ENCODE measurements at regions of chr6 and their contacts with region 1.

Region 1: DNA sequence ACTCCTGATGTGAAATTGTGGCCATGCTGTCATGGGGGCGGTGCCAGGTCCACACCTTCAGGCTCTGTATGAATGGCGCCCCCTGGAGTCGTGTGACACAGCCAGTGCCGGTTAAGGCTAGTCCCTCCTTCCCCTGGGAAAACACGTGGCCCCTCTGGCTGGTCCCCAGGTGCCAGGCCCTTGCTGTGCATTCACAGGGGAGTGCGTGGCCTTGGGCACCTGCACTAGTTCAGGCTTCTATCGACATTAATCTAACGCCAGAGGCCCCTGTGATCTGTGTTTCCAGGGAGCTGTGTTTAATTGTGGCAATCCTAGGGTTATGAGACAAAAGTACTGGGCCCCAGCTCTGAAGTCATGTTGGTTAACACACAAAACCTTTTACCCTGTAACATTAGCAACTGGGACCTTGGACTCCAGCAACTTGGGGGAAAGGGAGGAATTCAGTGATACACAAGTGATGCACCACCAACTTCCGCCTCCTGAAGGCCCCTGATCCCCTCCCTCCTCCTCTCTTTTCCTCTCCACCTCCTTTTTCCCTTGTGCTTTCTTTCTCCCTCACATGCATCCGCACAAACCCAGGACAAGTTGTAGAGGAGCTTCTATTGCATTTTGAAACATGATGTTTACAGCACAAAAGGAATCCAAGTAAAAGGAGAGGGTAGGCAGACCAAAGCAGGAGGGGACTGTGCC is 74.0 kb downstream of the SSR1 start:
- DNase-seq: peak; percentile 17 to 80 (median 73)
- ATAC-seq: peak; percentile 69
- H3K4me3 ChIP-seq: no peak overlapping the region
- H3K4me3 Mint-ChIP-seq: no peak overlapping the region
- H3K27ac ChIP-seq: no peak overlapping the region
- H3K27ac Mint-ChIP-seq: peak overlapping the region; percentile 55
- H3K4me1 ChIP-seq: no peaks in the 10 kb centered on the region
- H3K4me1 Mint-ChIP-seq: peaks cover 15% of the 10 kb centered on the region
- H3K27me3 ChIP-seq: no peaks in the 10 kb centered on the region
- H3K27me3 Mint-ChIP-seq: no peaks in the 10 kb centered on the region
- CTCF ChIP-seq: peak; percentile 47

Region 2: GRCh38 chr6:6556738-6557505 is 682.1 kb before region 1 on chr6:
- CTCF ChIA-PET with region 1: interaction called, 5 read pairs
- POLR2A ChIA-PET with region 1: no interaction called
- intact Hi-C with region 1: loop called in 1 of 2 experiments (anchors 5 kb)
- DNase-seq: peak in 7 of 9 experiments; percentile 21 to 72 (median 51)
- ATAC-seq: peak; percentile 62
- H3K4me3 ChIP-seq: no peak overlapping the region
- H3K4me3 Mint-ChIP-seq: no peak overlapping the region
- H3K27ac ChIP-seq: no peak overlapping the region
- H3K27ac Mint-ChIP-seq: no peak overlapping the region
- H3K4me1 ChIP-seq: no peaks in the 10 kb centered on the region
- H3K4me1 Mint-ChIP-seq: peaks cover 1% of the 10 kb centered on the region
- H3K27me3 ChIP-seq: no peaks in the 10 kb centered on the region
- H3K27me3 Mint-ChIP-seq: no peaks in the 10 kb centered on the region
- CTCF ChIP-seq: peak; percentile 89

Region 3: DNA sequence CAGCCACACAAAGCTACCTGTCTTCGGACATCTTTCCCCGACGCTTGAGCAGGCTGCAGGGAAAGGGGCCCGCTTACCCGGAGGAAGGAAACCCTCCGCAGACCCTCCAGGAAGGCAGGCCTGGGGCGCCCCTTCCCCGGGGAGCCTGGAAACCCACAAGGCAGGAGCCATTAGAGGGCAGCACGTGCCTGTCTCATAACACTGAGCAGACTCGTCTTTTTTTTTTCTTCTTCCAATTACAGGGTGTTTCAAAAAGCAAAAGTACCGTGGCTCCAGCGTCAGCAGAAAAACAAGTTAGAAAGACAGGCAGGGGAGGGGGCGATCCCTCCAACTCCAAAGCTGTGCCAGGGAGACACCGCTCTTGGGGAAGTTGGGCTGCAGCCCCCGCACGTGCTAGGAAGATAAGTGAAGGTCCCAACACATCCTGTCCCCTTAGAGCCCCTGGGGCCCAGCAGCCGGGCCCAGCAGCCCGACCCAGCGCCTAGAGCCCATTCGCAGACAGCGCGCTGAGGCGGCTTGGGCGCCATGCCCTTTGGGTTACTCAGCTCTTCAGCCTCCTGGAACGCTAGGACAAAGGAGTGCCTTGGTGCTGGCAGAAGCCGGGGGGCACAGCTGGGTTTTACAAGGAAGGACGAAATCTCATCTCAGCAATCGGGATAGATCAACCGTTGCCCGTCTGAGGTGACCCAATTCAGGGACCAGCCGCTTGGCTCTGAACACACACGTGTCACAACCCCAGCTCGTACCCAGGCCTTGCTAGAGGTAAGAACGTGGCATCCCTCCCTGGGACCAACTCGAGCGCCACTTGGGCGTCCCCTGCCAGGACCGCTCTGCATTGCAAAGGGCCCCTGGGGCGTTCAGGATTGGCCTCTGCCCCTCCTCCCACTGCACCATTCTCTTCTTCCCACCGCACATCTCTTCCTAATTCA is 514.2 kb before region 1 on chr6:
- CTCF ChIA-PET with region 1: interaction called, 47 read pairs
- POLR2A ChIA-PET with region 1: no interaction called
- intact Hi-C with region 1: loop called (anchors 1 kb)
- DNase-seq: peak; percentile 14 to 73 (median 52)
- ATAC-seq: peak; percentile 77
- H3K4me3 ChIP-seq: peak overlapping the region; percentile 29 to 38
- H3K4me3 Mint-ChIP-seq: peak overlapping the region; percentile 74
- H3K27ac ChIP-seq: no peak overlapping the region
- H3K27ac Mint-ChIP-seq: no peak overlapping the region
- H3K4me1 ChIP-seq: peaks cover 11% of the 10 kb centered on the region
- H3K4me1 Mint-ChIP-seq: peaks cover 6% of the 10 kb centered on the region
- H3K27me3 ChIP-seq: no peaks in the 10 kb centered on the region
- H3K27me3 Mint-ChIP-seq: peaks cover 8% of the 10 kb centered on the region
- CTCF ChIP-seq: peak; percentile 63

Region 4: GRCh38 chr6:6788394-6789020 is 450.5 kb before region 1 on chr6:
- CTCF ChIA-PET with region 1: no interaction called
- POLR2A ChIA-PET with region 1: no interaction called
- intact Hi-C with region 1: loop called in 1 of 2 experiments (anchors 5 kb)
- DNase-seq: peak in 3 of 9 experiments; percentile 10 to 42 (median 27)
- ATAC-seq: peak; percentile 79
- H3K4me3 ChIP-seq: no peak overlapping the region
- H3K4me3 Mint-ChIP-seq: no peak overlapping the region
- H3K27ac ChIP-seq: no peak overlapping the region
- H3K27ac Mint-ChIP-seq: no peak overlapping the region
- H3K4me1 ChIP-seq: no peaks in the 10 kb centered on the region
- H3K4me1 Mint-ChIP-seq: no peaks in the 10 kb centered on the region
- H3K27me3 ChIP-seq: no peaks in the 10 kb centered on the region
- H3K27me3 Mint-ChIP-seq: no peaks in the 10 kb centered on the region
- CTCF ChIP-seq: peak; percentile 35

Region 5: GRCh38 chr6:6927521-6928371 is 311.3 kb before region 1 on chr6:
- CTCF ChIA-PET with region 1: no interaction called
- POLR2A ChIA-PET with region 1: no interaction called
- intact Hi-C with region 1: loop called (anchors 5 to 10 kb)
- DNase-seq: peak in 2 of 9 experiments; percentile 5 to 22
- ATAC-seq: peak; percentile 46
- H3K4me3 ChIP-seq: no peak overlapping the region
- H3K4me3 Mint-ChIP-seq: no peak overlapping the region
- H3K27ac ChIP-seq: no peak overlapping the region
- H3K27ac Mint-ChIP-seq: no peak overlapping the region
- H3K4me1 ChIP-seq: no peaks in the 10 kb centered on the region
- H3K4me1 Mint-ChIP-seq: no peaks in the 10 kb centered on the region
- H3K27me3 ChIP-seq: no peaks in the 10 kb centered on the region
- H3K27me3 Mint-ChIP-seq: peaks cover 10% of the 10 kb centered on the region
- CTCF ChIP-seq: no peak

Region 6: DNA sequence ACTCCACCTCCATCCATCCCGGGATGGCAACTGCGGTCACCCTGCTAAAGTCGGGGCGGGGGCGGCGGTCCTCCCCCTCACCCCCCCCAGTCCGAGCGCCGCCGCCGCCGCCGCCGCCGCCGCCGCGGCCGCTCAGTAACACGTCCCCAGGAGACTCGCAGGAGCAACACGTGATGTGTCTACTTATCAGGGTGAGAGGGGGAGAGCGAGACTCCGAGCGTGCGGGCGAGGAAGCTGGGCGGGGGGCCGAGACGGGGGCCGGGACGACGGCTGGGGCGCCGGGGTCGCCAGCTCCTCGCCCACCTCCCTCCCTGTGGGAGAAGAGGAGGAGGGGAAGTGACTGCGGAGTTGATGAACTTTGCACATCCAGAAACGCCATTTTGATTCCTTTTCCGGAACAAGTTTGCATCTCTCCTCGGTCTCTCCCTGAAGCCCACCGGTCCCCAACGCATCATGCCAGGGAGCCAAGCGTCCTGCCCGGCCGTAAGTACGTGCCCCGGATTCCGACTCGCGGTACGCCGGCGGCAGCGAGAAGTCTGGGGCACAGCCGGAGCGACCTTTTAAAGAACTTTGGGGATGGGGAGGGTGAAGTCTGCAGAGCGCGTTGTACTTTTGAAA is 131.4 kb before region 1 on chr6 and contains the start of gene RREB1:
- CTCF ChIA-PET with region 1: interaction called, 5 read pairs
- POLR2A ChIA-PET with region 1: no interaction called
- intact Hi-C with region 1: loop called in 1 of 2 experiments (anchors 2 kb)
- DNase-seq: peak; percentile 22 to 79 (median 60)
- ATAC-seq: peak; percentile 43
- H3K4me3 ChIP-seq: peak within 1 kb of the TSS; percentile 97
- H3K4me3 Mint-ChIP-seq: peak within 1 kb of the TSS; percentile 95
- H3K27ac ChIP-seq: peak within 1 kb of the TSS; percentile 71 to 84
- H3K27ac Mint-ChIP-seq: peak within 1 kb of the TSS; percentile 97
- H3K4me1 ChIP-seq: peaks cover 31% of the 10 kb centered on the region
- H3K4me1 Mint-ChIP-seq: peaks cover 41% of the 10 kb centered on the region
- H3K27me3 ChIP-seq: no peaks in the 10 kb centered on the region
- H3K27me3 Mint-ChIP-seq: no peaks in the 10 kb centered on the region
- CTCF ChIP-seq: no peak
- total RNA-seq, gene RREB1: 47.1 to 52.4 TPM